Left ventricle myocardium inferior (tissue), 1 donor: ENCODE measurements at regions of chr21 and their contacts with region 1.

Region 1: GRCh38 chr21:39518138-39518846 is 66.5 kb downstream of the SH3BGR start:
- DNase-seq: no peak
- H3K4me3 ChIP-seq: no peak overlapping the region
- H3K27ac ChIP-seq: no peak overlapping the region
- H3K4me1 ChIP-seq: peaks cover 10% of the 10 kb centered on the region
- H3K27me3 ChIP-seq: no peaks in the 10 kb centered on the region
- CTCF ChIP-seq: peak; percentile 93

Region 2: GRCh38 chr21:39715804-39716397 is 197.6 kb after region 1 on chr21:
- intact Hi-C with region 1: loop called (anchors 1 kb)
- DNase-seq: peak; percentile 31
- H3K4me3 ChIP-seq: no peak overlapping the region
- H3K27ac ChIP-seq: no peak overlapping the region
- H3K4me1 ChIP-seq: peaks cover 5% of the 10 kb centered on the region
- H3K27me3 ChIP-seq: peaks cover 23% of the 10 kb centered on the region
- CTCF ChIP-seq: peak; percentile 80